HepG2 (cell line): ENCODE measurements at regions of chr16 and their contacts with region 1.

Region 1: DNA sequence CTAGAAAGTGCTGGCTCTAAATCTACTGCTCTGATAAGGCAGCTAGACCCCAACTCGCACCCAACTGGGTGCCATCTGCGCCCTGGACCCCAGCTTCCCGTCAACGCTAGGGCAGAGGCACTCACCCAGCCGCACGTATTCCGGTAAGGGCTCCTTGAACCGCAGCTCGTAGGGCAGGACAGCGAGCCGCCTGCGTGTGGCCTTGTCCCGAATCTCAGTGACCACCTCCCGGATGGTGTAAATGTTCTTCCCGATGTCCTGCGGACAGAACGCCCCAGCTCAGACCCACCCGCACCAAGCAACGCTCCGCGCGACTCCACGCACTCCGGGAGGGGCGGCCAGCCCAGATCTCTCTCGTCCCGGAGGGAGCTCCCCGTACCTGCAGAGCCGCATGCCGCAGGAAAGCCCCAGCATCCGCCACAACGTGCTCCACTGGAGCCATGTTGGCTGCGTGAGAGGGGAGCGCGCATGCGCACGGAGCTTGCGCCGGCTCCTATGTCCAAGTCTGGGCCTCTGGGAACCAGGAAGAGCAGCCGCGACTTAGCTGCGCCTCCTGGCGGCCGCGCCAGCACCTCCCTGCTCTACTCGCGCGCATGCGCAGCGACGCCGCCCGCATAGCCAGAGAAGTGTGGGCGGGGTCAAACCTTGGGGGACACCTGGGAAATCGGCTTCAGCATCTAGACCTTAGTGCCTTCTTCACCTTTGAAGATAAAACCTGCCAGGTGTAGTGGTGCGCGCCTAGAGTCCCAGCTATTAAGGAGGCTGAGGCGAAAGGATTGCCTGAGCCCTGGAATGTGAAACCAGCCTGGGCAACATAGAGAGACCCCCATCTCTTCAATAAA is at the start of gene NOB1:
- DNase-seq: peak; percentile 96
- ATAC-seq: peak; percentile 96
- H3K4me3 ChIP-seq: peak within 1 kb of the TSS; percentile 96 to 100 (median 100)
- H3K27ac ChIP-seq: peak within 1 kb of the TSS; percentile 74
- H3K4me1 ChIP-seq: peaks cover 40% of the 10 kb centered on the region
- H3K27me3 ChIP-seq: peaks cover 0 to 5% of the 10 kb centered on the region in 2 experiments; a peak in 1 of 5 replicates
- CTCF ChIP-seq: peak; percentile 100
- EP300 ChIP-seq: no peak
- POLR2A ChIP-seq: peak; percentile 98 to 99
- RAD21 ChIP-seq: peak; percentile 100
- total RNA-seq, gene NOB1: 47.1 and 83.5 TPM in 2 replicates

Region 2: GRCh38 chr16:69709456-69710084 is 45.1 kb before region 1 on chr16:
- CTCF ChIA-PET with region 1: interaction called, 38 read pairs
- POLR2A ChIA-PET with region 1: interaction called, 14 read pairs
- in situ Hi-C with region 1: loop called (anchors 5 kb)
- intact Hi-C with region 1: loop called (anchors 1 kb)
- DNase-seq: peak; percentile 81
- ATAC-seq: no peak
- H3K4me3 ChIP-seq: no peak overlapping the region
- H3K27ac ChIP-seq: no peak overlapping the region
- H3K4me1 ChIP-seq: peaks cover 12% of the 10 kb centered on the region; the same call in 1 of the 2 replicates
- H3K27me3 ChIP-seq: no peaks in the 10 kb centered on the region
- CTCF ChIP-seq: peak; percentile 85
- EP300 ChIP-seq: no peak
- POLR2A ChIP-seq: 0 out of 4 replicates have a peak, but pooled peaks of 1 of the 2 experiments have one; percentile 24
- RAD21 ChIP-seq: peak; percentile 80

Region 3: DNA sequence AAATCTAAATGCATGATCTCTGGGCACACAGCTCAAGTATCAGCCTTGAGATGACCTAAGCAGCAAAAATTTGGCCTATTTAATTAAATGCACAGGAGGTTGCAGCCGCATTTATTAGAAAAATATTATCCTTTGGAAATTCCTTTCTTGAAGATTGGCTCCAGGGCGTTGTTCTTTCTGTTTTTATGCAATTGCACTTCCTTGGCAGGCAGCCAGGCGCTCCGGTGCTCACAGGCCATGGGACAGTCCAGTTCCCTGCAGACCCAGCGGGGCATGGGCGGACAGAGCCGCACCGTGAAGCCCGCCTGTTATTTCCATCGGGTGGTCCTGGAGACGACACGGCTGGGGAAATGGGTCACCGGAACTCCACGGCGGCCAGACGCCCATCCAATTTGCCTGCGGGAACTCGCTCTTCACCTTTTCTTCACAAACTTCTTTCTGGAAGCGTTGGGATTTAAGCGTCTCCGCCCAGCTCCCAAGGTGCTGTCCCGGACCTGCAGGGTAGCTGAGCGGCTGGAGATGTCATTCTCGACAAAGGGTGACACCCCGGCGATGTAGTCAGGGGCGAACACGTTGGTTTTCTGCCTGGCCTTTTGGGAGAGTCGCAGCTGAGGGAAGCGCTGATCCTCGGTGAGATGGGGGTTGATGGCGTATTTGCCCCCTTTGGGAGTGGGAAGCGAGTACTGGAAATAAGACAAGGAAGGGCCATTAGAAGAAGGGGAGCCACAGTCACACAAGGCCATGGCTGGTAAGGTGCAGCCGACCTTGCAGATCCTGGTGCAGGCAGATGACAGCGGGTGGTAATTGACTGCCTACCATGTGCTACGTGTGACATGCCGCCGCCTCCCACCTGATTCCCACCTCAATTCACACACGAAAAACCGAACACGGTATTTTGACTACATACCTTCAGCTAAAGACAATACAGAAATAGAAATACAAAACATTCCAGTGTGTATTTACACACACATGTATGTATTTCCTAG is 12.5 kb before region 1 on chr16:
- CTCF ChIA-PET with region 1: no interaction called
- POLR2A ChIA-PET with region 1: interaction called, 26 read pairs
- in situ Hi-C with region 1: no loop called
- intact Hi-C with region 1: no loop called
- DNase-seq: no peak
- ATAC-seq: 0 out of 3 replicates have a peak, but pooled peaks have one; percentile 12
- H3K4me3 ChIP-seq: no peak overlapping the region
- H3K27ac ChIP-seq: no peak overlapping the region
- H3K4me1 ChIP-seq: peaks cover 8% of the 10 kb centered on the region
- H3K27me3 ChIP-seq: no peaks in the 10 kb centered on the region
- CTCF ChIP-seq: no peak
- EP300 ChIP-seq: no peak
- POLR2A ChIP-seq: no peak
- RAD21 ChIP-seq: no peak

Region 4: GRCh38 chr16:69796351-69797118 is 41.8 kb after region 1 on chr16:
- CTCF ChIA-PET with region 1: no interaction called
- POLR2A ChIA-PET with region 1: no interaction called
- in situ Hi-C with region 1: no loop called
- intact Hi-C with region 1: no loop called
- DNase-seq: peak; percentile 74
- ATAC-seq: peak; percentile 85
- H3K4me3 ChIP-seq: no peak overlapping the region
- H3K27ac ChIP-seq: no peak overlapping the region
- H3K4me1 ChIP-seq: peaks cover 5% of the 10 kb centered on the region
- H3K27me3 ChIP-seq: no peaks in the 10 kb centered on the region; a peak in 1 of 5 replicates
- CTCF ChIP-seq: peak; percentile 94
- EP300 ChIP-seq: no peak
- POLR2A ChIP-seq: no peak
- RAD21 ChIP-seq: peak; percentile 96